ENCODE measurements at regions of chr20 and their contacts with region 1.

Region 1: GRCh38 chr20:956330-956951 is 40.3 kb upstream of the ANGPT4 start:
- DNase-seq: no peak
- H3K4me3 ChIP-seq: no peak overlapping the region
- CTCF ChIP-seq: peak; percentile 96

Region 2: DNA sequence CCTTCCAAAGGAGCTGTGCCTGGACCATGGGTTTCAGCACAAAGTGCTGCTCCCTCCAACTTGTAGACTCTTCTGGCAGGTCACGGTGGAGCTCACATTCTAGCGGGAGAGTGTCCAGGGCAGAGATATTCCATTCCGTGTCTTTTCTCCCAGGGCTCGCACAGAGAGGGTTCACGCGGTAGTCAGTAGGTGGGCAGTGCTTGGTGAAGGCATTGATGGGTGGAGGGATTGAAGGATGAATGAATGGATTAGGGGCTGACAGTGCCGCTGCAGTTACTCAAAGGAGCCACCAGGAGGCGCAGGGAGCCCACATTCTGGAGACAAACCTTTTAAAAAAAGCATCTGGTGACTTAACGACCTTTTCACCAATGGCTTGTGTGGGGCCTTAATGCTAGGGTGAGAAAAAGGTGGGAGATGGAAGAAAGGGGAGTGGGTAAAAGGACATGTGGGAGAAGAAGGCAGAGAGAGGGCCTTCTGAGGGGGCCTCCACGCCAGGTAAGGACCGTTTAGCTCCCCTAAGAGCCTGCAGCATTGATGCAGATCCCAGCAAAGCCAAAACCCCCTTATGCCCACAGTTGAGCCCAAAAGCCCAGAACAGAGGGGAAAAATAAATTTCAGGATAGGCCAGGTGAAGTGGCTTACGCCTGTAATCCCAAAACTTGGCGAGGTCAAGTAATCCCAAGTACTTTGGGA is 140.4 kb before region 1 on chr20:
- CTCF ChIA-PET with region 1: interaction called, 355 read pairs
- POLR2A ChIA-PET with region 1: no interaction called
- DNase-seq: no peak
- H3K4me3 ChIP-seq: no peak overlapping the region
- CTCF ChIP-seq: peak; percentile 92

Region 3: GRCh38 chr20:833450-834150 is 122.8 kb before region 1 on chr20 and contains the start of gene FAM110A:
- CTCF ChIA-PET with region 1: interaction called, 32 read pairs
- POLR2A ChIA-PET with region 1: interaction called, 3 read pairs
- DNase-seq: peak; percentile 38
- H3K4me3 ChIP-seq: peak within 1 kb of the TSS; percentile 87
- CTCF ChIP-seq: no peak

Region 4: DNA sequence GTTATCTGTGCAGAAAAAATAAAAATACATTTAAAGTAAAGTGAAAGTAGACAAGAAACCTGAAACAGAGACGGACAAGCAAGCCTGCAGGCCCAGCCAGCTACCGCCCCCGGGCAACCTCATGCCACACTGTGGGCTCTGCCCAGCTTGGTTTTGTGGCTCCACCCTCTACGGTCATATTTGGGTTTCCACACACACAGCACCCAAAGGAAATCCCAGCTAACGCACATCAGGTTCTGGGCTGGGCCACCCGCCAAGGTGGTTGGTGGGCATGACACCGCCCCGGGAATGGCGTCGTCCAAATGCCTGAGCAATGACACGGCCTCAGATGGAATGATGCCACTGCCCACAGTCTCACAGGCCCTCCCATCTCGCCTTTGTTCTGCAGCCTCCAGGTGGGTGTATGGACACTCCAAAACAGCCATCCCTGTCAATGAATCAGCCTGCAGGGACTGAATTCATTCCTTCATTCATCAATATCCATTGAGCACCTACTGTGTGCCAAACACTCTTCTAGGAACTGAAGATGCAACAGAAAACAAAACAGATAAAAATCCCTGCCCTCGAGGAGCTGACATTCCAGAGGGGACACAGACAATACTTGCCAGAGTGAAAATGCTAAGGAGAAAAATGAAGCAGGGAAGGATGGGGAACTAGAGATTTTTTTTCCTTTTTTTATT is 99.9 kb before region 1 on chr20:
- CTCF ChIA-PET with region 1: interaction called, 11 read pairs
- POLR2A ChIA-PET with region 1: no interaction called
- DNase-seq: no peak
- H3K4me3 ChIP-seq: no peak overlapping the region
- CTCF ChIP-seq: no peak

Region 5: GRCh38 chr20:1199212-1199873 is 242.9 kb after region 1 on chr20:
- CTCF ChIA-PET with region 1: no interaction called
- POLR2A ChIA-PET with region 1: no interaction called
- DNase-seq: no peak
- H3K4me3 ChIP-seq: no peak overlapping the region
- CTCF ChIP-seq: no peak

Region 6: DNA sequence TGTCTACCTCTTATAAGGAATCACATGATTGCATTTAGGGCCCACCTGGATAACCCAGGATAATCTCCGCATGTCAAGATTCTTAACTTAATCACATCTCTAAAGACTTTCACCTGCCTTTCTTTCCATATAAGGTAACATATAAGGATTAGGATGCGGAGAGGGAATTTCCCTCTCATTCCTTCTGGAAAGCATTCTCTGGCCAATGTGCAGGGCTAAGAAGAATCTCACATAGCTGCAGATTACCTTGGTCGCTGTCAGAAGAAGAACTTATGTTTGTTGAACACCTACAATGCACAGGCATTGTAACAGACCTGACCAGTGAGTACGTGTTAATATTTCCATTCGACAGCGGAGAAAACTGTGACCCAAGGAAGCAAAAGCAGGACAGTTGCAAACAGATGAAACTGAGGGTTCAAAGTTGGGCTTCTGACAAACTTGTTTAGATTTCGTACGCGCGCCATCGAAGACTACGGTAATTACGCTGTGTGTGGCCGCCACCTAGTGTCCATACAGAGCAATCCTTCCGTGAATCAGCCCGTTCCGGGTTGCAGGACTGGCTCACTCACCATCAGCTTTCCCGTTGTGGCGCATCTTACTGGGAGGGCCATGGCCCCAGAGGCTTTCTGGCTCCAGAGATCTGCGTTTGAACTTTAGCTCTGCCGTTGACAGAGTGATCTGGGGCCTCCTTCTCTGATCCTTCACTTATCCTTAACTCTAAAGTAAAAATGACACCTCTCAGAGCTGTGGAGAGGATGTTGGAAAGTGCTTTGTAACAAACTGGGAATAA is 256.4 kb after region 1 on chr20:
- CTCF ChIA-PET with region 1: interaction called, 14 read pairs
- POLR2A ChIA-PET with region 1: no interaction called
- DNase-seq: peak; percentile 14
- H3K4me3 ChIP-seq: no peak overlapping the region
- CTCF ChIP-seq: peak; percentile 85